ENCODE measurements at regions of chr2 and their contacts with region 1.

Region 1: GRCh38 chr2:120312861-120313694 is 32.9 kb upstream of the INHBB start:
- DNase-seq: peak; percentile 87
- H3K4me3 Mint-ChIP-seq: peak overlapping the region; percentile 56
- H3K27ac Mint-ChIP-seq: no peak overlapping the region
- H3K4me1 Mint-ChIP-seq: peaks cover 22% of the 10 kb centered on the region
- H3K27me3 Mint-ChIP-seq: no peaks in the 10 kb centered on the region

Region 2: DNA sequence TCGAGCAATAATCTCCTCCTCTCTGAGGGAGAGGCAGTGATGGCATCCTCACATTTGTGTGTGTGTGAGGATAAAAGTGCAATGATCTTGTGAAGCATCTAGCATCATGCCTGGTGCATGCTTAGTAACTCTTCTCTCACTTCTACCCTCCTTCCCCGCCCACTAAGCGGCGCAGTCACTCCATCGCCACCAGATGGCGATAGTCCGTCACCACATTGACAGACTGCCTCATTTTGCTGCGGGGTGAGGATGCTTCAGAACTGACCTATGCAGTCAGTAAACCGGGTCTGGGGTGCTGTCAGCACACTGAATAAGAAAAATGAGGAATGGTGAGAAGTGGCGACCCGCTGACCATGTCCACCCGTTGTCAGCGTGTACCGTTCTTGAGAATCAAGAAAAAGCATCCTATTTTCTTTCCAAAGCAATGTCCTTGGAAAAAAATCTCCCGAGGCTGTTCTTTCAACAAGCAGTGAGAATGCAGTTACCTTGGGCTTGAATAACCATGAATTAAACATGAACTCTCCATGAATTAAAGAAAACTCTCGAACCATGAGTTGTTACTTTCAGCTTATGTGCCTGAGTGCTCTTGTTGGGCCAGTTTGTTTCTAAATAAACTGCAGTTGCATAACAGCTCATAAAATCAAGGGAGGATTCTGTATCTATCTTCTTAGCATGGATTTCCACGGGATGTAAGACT is 671.4 kb before region 1 on chr2:
- CTCF ChIA-PET with region 1: interaction called, 12 read pairs
- POLR2A ChIA-PET with region 1: no interaction called
- intact Hi-C with region 1: no loop called
- DNase-seq: peak; percentile 84
- H3K4me3 Mint-ChIP-seq: no peak overlapping the region
- H3K27ac Mint-ChIP-seq: no peak overlapping the region
- H3K4me1 Mint-ChIP-seq: no peaks in the 10 kb centered on the region
- H3K27me3 Mint-ChIP-seq: peaks cover 3% of the 10 kb centered on the region

Region 3: GRCh38 chr2:120109186-120110061 is 203.7 kb before region 1 on chr2:
- CTCF ChIA-PET with region 1: interaction called, 60 read pairs
- POLR2A ChIA-PET with region 1: no interaction called
- intact Hi-C with region 1: loop called (anchors 1 kb)
- DNase-seq: no peak
- H3K4me3 Mint-ChIP-seq: no peak overlapping the region
- H3K27ac Mint-ChIP-seq: peak overlapping the region; percentile 42
- H3K4me1 Mint-ChIP-seq: peaks cover 17% of the 10 kb centered on the region
- H3K27me3 Mint-ChIP-seq: no peaks in the 10 kb centered on the region

Region 4: GRCh38 chr2:120223034-120223912 is 89.8 kb before region 1 on chr2 and contains the start of gene TMEM185B:
- CTCF ChIA-PET with region 1: interaction called, 16 read pairs
- POLR2A ChIA-PET with region 1: no interaction called
- intact Hi-C with region 1: loop called (anchors 1 kb)
- DNase-seq: peak; percentile 95
- H3K4me3 Mint-ChIP-seq: peak within 1 kb of the TSS; percentile 81
- H3K27ac Mint-ChIP-seq: peak within 1 kb of the TSS; percentile 83
- H3K4me1 Mint-ChIP-seq: peaks cover 52% of the 10 kb centered on the region
- H3K27me3 Mint-ChIP-seq: no peaks in the 10 kb centered on the region
- total RNA-seq, gene TMEM185B: 19.4 to 19.7 TPM

Region 5: DNA sequence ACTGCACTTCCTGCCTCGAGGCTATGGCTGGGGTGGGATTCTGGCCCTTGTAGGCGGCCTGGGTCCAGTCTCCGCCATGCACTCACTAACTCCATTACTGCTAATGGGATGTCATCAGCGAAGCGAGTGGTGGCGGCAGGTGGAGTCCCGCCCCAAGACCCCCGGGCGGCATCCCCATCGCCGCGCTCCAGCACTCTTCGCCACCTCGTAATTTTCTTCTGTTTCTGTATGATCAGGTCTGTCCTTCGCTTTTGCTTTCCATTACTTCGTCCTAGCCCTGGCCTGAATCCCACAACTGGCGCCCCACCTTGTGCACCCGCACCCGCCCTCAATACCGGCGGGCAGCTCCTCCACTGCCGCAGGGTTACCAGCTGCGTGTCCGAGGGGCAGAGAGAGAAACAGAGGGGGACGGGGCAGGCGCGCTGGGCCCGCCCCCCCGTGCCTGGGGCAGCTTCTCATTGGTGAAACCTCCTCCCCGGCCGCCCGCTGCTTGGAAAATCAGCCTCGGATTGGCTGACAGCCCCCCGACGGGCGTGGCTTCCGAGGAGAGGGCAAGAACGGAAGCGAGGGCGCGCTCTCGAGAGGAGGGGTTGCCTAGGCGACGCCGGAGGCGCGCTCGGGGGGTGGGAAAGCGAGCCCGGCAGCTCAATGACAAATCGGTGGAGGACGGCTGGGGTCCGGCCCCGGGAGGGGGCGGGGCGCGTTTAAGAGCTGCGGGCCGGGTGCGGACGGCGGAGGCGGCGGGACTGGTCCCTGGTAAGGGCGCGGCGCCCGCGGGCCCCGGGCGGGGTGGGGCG is 60.7 kb before region 1 on chr2 and contains the start of gene RALB:
- CTCF ChIA-PET with region 1: interaction called, 17 read pairs
- POLR2A ChIA-PET with region 1: no interaction called
- intact Hi-C with region 1: loop called (anchors 1 kb)
- DNase-seq: peak; percentile 99
- H3K4me3 Mint-ChIP-seq: peak within 1 kb of the TSS; percentile 98
- H3K27ac Mint-ChIP-seq: peak within 1 kb of the TSS; percentile 83
- H3K4me1 Mint-ChIP-seq: peaks cover 43% of the 10 kb centered on the region
- H3K27me3 Mint-ChIP-seq: peaks cover 7% of the 10 kb centered on the region
- total RNA-seq, gene RALB: 52.5 to 52.9 TPM

Region 6: GRCh38 chr2:120287183-120288015 is 25.7 kb before region 1 on chr2:
- CTCF ChIA-PET with region 1: interaction called, 15 read pairs
- POLR2A ChIA-PET with region 1: no interaction called
- intact Hi-C with region 1: no loop called
- DNase-seq: peak; percentile 66
- H3K4me3 Mint-ChIP-seq: peak overlapping the region; percentile 12
- H3K27ac Mint-ChIP-seq: peak overlapping the region; percentile 78
- H3K4me1 Mint-ChIP-seq: peaks cover 27% of the 10 kb centered on the region
- H3K27me3 Mint-ChIP-seq: no peaks in the 10 kb centered on the region

Region 7: DNA sequence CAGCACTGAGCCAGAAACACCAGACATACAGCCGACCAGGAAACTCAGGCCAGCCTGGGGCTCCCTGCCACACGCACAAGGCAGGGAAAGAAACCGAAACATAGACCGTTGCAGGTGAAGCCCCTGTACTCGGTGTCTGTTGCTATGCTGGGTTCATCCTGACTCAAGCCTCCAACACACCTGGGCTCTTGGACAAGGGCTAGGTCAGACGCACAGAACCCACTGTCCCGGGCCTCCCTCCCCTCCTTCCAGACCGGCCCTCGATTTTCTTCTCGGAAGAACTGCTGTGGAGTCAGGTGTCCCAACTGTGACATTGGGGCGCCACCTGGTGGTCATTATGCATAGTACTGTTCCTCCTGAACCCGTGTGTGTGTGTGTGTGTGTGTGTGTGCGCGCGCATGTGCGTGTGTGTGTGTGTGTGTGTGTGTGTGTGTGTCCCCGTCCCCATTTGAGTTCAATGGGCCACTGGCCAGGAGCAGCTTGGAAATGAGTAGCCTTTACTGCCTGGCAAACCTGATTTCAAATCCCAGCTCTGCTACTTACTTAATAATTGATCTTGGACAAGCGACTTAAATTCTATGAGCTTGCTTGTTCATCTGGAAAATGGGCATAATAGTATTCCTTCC is 367.2 kb after region 1 on chr2:
- CTCF ChIA-PET with region 1: interaction called, 5 read pairs
- POLR2A ChIA-PET with region 1: no interaction called
- intact Hi-C with region 1: loop called (anchors 1 kb)
- DNase-seq: peak; percentile 79
- H3K4me3 Mint-ChIP-seq: no peak overlapping the region
- H3K27ac Mint-ChIP-seq: no peak overlapping the region
- H3K4me1 Mint-ChIP-seq: peaks cover 2% of the 10 kb centered on the region
- H3K27me3 Mint-ChIP-seq: peaks cover 13% of the 10 kb centered on the region

Measured in activated CD4-positive, alpha-beta memory T cell treated with anti-CD3 and anti-CD28 coated beads for 36 hours (primary cell).